B cell (primary cell): ENCODE measurements at regions of chr13 and their contacts with region 1.

Region 1: GRCh38 chr13:46184277-46184699 is 2.3 kb upstream of the LCP1 start:
- DNase-seq: peak; percentile 88
- ATAC-seq: peak; percentile 48
- H3K4me3 ChIP-seq: peak overlapping the region in 4 of 5 experiments; percentile 19 to 99 (median 48)
- H3K4me3 Mint-ChIP-seq: peak overlapping the region; percentile 98
- H3K27ac ChIP-seq: peak overlapping the region; percentile 84 to 91
- H3K27ac Mint-ChIP-seq: peak overlapping the region; percentile 96
- H3K4me1 ChIP-seq: peaks cover 26 to 27% of the 10 kb centered on the region in 2 donors
- H3K4me1 Mint-ChIP-seq: peaks cover 45% of the 10 kb centered on the region
- H3K27me3 ChIP-seq: no peaks in the 10 kb centered on the region
- H3K27me3 Mint-ChIP-seq: no peaks in the 10 kb centered on the region
- CTCF ChIP-seq: peak; percentile 83

Region 2: DNA sequence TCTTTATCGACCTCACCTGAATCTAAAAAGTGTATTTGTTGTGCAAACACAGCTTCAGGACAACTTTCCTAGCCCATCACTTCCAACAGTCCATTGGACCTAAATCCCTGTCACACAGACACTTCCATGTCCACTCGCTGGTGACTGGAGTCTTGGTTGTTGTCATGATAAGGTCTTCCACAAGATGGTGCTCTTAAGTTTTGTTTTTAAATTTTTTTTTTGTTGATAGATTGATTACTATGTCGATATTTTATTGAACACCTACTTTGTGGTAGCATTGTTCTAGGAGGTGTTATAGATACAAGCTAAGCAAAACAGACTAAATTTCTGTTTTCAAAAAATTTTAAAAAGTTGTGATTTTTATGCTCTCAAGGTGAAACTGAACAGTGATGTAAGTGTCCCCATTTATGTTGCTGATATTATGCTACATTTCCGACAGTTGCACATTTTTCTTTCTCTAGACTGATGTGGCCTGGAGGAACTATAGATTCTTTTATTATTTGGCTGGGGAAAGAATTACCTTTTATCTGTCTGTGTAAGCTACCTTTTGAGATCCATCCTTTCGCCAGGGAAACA is 560.7 kb before region 1 on chr13:
- CTCF ChIA-PET with region 1: interaction called, 4 read pairs
- POLR2A ChIA-PET with region 1: no interaction called
- intact Hi-C with region 1: loop called (anchors 5 kb)
- DNase-seq: no peak
- ATAC-seq: no peak
- H3K4me3 ChIP-seq: no peak overlapping the region
- H3K4me3 Mint-ChIP-seq: no peak overlapping the region
- H3K27ac ChIP-seq: no peak overlapping the region
- H3K27ac Mint-ChIP-seq: no peak overlapping the region
- H3K4me1 ChIP-seq: no peaks in the 10 kb centered on the region
- H3K4me1 Mint-ChIP-seq: no peaks in the 10 kb centered on the region
- H3K27me3 ChIP-seq: peaks cover 0 to 18% (median 0%) of the 10 kb centered on the region in 4 experiments
- H3K27me3 Mint-ChIP-seq: peaks cover 53% of the 10 kb centered on the region
- CTCF ChIP-seq: peak; percentile 38

Region 3: GRCh38 chr13:46126552-46127357 is 57.5 kb before region 1 on chr13:
- CTCF ChIA-PET with region 1: interaction called, 4 read pairs
- POLR2A ChIA-PET with region 1: no interaction called
- intact Hi-C with region 1: loop called (anchors 2 kb)
- DNase-seq: peak; percentile 74
- ATAC-seq: peak; percentile 92
- H3K4me3 ChIP-seq: no peak overlapping the region
- H3K4me3 Mint-ChIP-seq: no peak overlapping the region
- H3K27ac ChIP-seq: peak overlapping the region in 1 of 2 donors; percentile 78
- H3K27ac Mint-ChIP-seq: peak overlapping the region; percentile 88
- H3K4me1 ChIP-seq: peaks cover 13 to 16% of the 10 kb centered on the region in 2 donors
- H3K4me1 Mint-ChIP-seq: peaks cover 30% of the 10 kb centered on the region
- H3K27me3 ChIP-seq: no peaks in the 10 kb centered on the region
- H3K27me3 Mint-ChIP-seq: no peaks in the 10 kb centered on the region
- CTCF ChIP-seq: peak; percentile 80

Region 4: DNA sequence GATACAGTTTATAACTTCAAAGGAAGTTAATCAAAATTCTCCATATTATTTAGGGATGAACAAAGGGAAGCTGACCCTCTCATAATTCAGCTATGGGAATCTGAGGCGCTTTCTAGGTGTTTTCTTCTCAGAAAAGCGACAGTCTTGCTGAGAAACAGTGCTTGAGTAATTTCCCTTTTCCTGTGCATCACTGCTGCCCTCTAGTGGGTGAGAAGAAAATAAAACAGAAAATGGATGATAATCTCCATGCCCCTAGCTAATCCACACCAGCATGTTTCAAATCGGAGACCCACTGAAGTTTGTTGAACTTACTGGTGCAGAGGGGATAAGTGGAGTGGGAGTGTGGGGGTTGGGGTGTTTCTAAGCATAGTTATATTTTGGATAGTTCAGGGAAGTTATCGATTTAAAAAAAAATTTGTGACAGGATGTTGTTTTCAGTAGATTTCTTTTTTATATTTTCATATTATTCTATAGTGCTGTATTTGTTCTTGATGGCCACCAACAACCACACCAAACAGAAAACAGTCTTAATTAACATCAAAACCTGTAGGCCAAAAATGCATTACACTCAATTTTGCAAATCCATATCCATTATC is 23.7 kb before region 1 on chr13:
- CTCF ChIA-PET with region 1: interaction called, 225 read pairs
- POLR2A ChIA-PET with region 1: interaction called, 3 read pairs
- intact Hi-C with region 1: loop called (anchors 1 kb)
- DNase-seq: peak; percentile 85
- ATAC-seq: peak; percentile 66
- H3K4me3 ChIP-seq: no peak overlapping the region
- H3K4me3 Mint-ChIP-seq: peak overlapping the region; percentile 63
- H3K27ac ChIP-seq: peak overlapping the region; percentile 53 to 88
- H3K27ac Mint-ChIP-seq: peak overlapping the region; percentile 84
- H3K4me1 ChIP-seq: peaks cover 43 to 45% of the 10 kb centered on the region in 2 donors
- H3K4me1 Mint-ChIP-seq: peaks cover 50% of the 10 kb centered on the region
- H3K27me3 ChIP-seq: no peaks in the 10 kb centered on the region
- H3K27me3 Mint-ChIP-seq: no peaks in the 10 kb centered on the region
- CTCF ChIP-seq: peak; percentile 83

Region 5: DNA sequence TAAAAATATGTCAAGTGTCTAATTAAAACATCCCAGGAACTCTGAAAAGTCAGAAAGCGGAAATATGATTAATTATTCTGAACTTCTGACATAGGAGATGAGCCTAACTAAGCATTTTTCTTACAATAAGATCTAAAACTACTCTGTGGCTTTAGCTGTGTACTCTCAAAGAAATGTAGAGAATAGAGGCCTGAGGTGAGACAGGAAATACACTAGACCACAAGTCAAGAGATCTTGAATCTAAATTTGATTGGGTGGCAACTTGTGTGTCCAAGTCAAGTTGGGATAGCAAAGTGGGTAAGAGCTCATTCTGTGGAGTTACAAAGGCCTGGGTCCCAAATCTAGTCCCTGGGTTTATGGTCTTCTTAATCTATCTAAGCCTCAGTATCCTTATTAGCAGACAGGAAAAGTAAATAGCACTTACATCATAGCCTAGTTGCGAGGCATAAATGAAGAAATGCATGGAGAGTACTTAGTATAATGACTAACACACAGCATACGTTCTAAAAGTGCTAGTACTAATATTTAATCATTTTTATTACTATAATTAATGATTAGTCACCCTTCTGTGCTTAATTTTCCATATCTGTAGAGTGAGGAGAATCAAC is 18.0 kb after region 1 on chr13:
- CTCF ChIA-PET with region 1: interaction called, 4 read pairs
- POLR2A ChIA-PET with region 1: no interaction called
- intact Hi-C with region 1: loop called (anchors 2 kb)
- DNase-seq: no peak
- ATAC-seq: no peak
- H3K4me3 ChIP-seq: no peak overlapping the region
- H3K4me3 Mint-ChIP-seq: no peak overlapping the region
- H3K27ac ChIP-seq: peak overlapping the region in 1 of 2 donors; percentile 52
- H3K27ac Mint-ChIP-seq: no peak overlapping the region
- H3K4me1 ChIP-seq: peaks cover 19 to 23% of the 10 kb centered on the region in 2 donors
- H3K4me1 Mint-ChIP-seq: peaks cover 27% of the 10 kb centered on the region
- H3K27me3 ChIP-seq: no peaks in the 10 kb centered on the region
- H3K27me3 Mint-ChIP-seq: no peaks in the 10 kb centered on the region
- CTCF ChIP-seq: no peak

Region 6: GRCh38 chr13:46369506-46370277 is 185.4 kb after region 1 on chr13:
- CTCF ChIA-PET with region 1: no interaction called
- POLR2A ChIA-PET with region 1: no interaction called
- intact Hi-C with region 1: loop called (anchors 5 kb)
- DNase-seq: peak; percentile 65
- ATAC-seq: peak; percentile 48
- H3K4me3 ChIP-seq: peak overlapping the region; percentile 13 to 56 (median 42)
- H3K4me3 Mint-ChIP-seq: peak overlapping the region; percentile 78
- H3K27ac ChIP-seq: peak overlapping the region; percentile 59 to 84
- H3K27ac Mint-ChIP-seq: peak overlapping the region; percentile 82
- H3K4me1 ChIP-seq: peaks cover 68 to 73% of the 10 kb centered on the region in 2 donors
- H3K4me1 Mint-ChIP-seq: peaks cover 81% of the 10 kb centered on the region
- H3K27me3 ChIP-seq: no peaks in the 10 kb centered on the region
- H3K27me3 Mint-ChIP-seq: no peaks in the 10 kb centered on the region
- CTCF ChIP-seq: no peak

Region 7: DNA sequence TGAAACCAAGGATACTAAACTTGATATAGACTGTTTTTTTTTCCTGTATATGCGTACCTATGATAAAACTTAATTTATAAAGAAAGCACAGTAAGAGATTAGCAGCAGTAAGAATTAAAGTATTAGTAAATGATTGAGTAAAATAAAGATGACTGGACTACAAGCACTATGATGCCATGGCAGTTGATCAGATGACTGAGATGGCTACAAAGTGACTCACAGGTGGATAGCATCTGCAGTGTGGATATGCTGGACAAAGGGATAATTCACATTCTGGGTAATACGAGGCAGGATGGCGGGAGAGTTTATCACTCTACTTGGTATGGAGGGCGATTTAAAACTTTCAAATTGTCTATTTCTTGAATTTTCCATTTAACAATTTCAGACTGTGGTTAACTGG is 700.7 kb after region 1 on chr13:
- CTCF ChIA-PET with region 1: no interaction called
- POLR2A ChIA-PET with region 1: no interaction called
- intact Hi-C with region 1: no loop called
- DNase-seq: no peak
- ATAC-seq: no peak
- H3K4me3 ChIP-seq: no peak overlapping the region
- H3K4me3 Mint-ChIP-seq: no peak overlapping the region
- H3K27ac ChIP-seq: no peak overlapping the region
- H3K27ac Mint-ChIP-seq: no peak overlapping the region
- H3K4me1 ChIP-seq: no peaks in the 10 kb centered on the region
- H3K4me1 Mint-ChIP-seq: no peaks in the 10 kb centered on the region
- H3K27me3 ChIP-seq: peaks cover 0 to 16% (median under 1%) of the 10 kb centered on the region in 4 experiments
- H3K27me3 Mint-ChIP-seq: peaks cover 29% of the 10 kb centered on the region
- CTCF ChIP-seq: no peak